ENCODE measurements at regions of chr1 and their contacts with region 1.

Region 1: DNA sequence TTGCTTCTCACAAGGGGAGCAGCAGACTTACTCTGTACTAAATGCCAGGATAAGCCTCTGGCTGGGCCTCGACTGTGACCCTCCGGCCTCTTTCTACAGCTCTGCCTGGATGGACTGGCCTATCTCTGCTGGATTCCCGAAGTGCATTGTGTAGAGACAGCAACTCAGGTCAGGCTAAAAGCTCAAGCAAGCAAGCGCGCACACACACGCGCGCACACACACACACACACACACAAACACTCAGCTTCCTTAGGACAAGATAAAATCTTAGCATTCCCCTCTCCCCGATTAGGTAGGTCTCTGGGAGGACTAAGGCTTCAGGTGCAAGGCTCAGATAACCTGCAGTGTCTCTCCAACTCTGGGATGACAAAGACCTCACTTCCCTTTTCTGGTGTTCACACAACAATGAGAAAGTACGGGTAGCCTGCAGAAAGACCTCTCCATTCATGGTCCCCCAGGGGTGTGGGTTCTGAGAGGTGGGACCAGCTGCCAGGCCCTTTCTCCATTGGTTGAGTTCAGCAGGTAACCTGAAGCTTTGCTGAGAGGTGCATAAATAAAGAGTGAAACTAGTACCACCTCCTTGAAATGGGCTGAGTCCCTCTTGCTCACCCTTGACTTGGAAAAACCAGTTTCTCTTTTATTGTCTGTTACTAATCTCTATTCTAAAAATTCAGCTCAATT is 155.1 kb upstream of the CAMK1G start:
- DNase-seq: no peak
- ATAC-seq: no peak
- H3K4me3 ChIP-seq: no peak overlapping the region
- H3K27ac ChIP-seq: no peak overlapping the region
- H3K4me1 ChIP-seq: no peaks in the 10 kb centered on the region
- H3K27me3 ChIP-seq: peaks cover 0 to 21% (median 5%) of the 10 kb centered on the region in 7 donors
- CTCF ChIP-seq: no peak

Region 2: DNA sequence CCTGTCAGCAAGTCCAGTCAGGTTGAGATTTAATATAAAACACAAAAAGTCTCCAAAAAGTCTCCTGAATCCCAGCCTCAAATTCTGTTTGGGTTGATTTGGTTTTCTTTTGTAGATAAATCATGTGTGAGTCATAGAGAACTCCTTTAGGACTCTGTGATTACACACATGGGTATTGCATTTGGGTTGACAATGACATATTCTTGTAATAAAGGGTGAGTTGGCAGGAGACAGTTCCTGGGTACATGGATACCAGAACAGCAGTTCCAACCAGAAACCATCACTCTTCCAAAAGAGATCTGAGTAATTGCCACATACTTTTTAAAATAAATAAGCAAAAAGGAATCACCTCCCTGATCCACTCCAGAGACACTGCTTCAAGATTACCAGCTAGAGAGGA is 1965.4 kb before region 1 on chr1:
- intact Hi-C with region 1: loop called in 1 of 10 experiments (anchors 5 kb)
- DNase-seq: no peak
- ATAC-seq: no peak
- H3K4me3 ChIP-seq: no peak overlapping the region
- H3K27ac ChIP-seq: no peak overlapping the region
- H3K4me1 ChIP-seq: no peaks in the 10 kb centered on the region
- H3K27me3 ChIP-seq: peaks cover 0 to 59% (median 19%) of the 10 kb centered on the region in 7 donors
- CTCF ChIP-seq: no peak

Region 3: DNA sequence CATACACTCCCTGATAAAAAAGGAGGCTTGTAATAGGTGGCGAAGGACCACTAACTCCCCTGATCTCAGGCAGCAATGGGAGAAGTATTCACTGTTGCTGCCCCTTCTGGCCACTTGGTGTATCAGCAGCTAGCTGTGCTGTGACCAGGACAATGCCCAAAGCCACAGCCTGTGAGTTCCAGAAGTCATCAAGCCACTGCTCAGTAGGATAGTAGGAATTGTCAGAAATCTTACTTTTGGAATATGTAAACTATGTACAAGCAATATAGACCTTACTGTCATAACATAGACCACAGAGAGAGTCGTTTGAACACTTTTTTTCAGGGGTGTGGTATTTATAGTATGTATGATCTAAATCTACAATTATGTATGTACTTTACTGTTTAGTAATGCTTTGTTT is 93.2 kb before region 1 on chr1:
- intact Hi-C with region 1: loop called in 1 of 10 experiments (anchors 10 kb)
- DNase-seq: no peak
- ATAC-seq: no peak
- H3K4me3 ChIP-seq: no peak overlapping the region
- H3K27ac ChIP-seq: no peak overlapping the region
- H3K4me1 ChIP-seq: no peaks in the 10 kb centered on the region
- H3K27me3 ChIP-seq: peaks cover 0 to 20% (median 0%) of the 10 kb centered on the region in 7 donors
- CTCF ChIP-seq: peak; percentile 23 to 75 (median 68)

Region 4: DNA sequence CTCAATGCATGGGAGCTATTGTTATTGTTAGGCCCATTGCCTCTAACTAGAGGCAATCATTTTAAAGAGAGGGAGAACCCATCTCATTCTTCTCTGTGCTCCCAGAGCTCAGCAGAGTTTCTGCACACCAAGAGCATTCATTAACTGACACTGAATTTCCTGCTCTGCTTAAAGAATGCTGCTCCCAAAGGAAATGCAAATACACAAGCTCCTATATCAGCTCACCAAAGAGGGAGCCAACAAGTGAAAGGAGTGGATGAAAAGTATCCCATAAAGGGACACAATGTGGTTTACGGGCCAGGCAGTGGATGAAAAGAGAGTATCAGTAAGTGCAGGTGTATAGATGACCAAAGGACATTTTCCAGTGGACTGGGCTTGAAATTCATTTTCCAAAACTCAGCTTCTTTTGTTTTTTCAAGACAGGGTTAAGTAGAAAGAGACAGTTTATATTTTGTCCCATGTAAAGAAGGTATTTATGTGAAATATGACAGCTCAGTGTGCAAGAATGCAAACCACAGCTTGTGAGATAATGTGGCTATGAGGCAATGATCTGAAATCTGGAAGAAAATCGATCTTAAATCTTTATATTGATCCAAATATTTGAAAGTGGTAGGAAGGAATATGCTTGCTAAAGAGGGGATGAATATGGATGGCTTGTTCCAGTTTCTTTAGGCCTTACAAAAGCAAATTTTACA is 52.6 kb before region 1 on chr1:
- intact Hi-C with region 1: no loop called
- DNase-seq: no peak
- ATAC-seq: no peak
- H3K4me3 ChIP-seq: no peak overlapping the region
- H3K27ac ChIP-seq: no peak overlapping the region
- H3K4me1 ChIP-seq: no peaks in the 10 kb centered on the region
- H3K27me3 ChIP-seq: peaks cover 0 to 15% (median 0%) of the 10 kb centered on the region in 7 donors
- CTCF ChIP-seq: no peak

Measured in heart right ventricle (tissue), 16 donors.